Colonic mucosa (tissue), 4 donors: ENCODE measurements at regions of chr4 and their contacts with region 1.

Region 1: DNA sequence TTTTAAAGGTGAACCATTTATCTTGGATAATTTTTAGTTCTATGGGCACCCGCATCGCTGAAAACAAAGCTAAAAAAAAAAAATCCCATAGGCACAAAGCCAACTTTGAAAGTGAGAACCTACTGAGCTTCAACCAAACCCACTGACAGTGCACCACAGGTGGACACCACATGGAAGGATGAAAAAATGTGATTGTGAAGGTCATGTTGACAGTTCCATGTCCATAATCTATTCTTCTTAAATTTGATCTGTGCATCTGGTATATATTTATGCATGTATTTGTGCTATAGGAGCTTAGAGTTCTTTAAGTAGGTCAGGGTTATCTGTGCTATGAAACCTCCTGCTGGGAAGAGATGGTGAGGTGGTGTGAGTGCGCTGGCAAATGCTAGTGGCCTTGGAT is 374.3 kb downstream of the SPRY1 start:
- DNase-seq: no peak
- H3K4me3 ChIP-seq: no peak overlapping the region
- H3K27ac ChIP-seq: no peak overlapping the region
- H3K4me1 ChIP-seq: no peaks in the 10 kb centered on the region
- H3K27me3 ChIP-seq: no peaks in the 10 kb centered on the region
- CTCF ChIP-seq: no peak

Region 2: DNA sequence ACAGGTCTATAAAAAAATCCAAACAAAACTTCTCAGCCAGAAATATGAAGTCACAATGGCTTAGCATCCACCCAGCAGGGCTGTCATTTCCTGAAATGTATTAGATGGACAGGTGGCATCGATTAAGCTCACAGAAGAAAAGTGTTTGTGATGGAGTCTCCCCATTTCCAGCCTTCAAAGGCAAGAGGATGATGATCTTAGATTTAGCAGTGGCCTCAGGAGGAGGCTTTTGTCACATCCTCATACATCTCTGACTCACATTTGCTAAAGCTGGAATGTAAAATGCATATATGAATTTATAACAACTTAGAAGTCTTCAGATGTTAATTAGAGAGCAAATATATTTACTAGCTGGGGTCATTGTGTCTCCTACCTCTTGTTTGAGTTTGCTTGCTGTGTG is 67.6 kb after region 1 on chr4:
- intact Hi-C with region 1: no loop called
- DNase-seq: no peak
- H3K4me3 ChIP-seq: no peak overlapping the region
- H3K27ac ChIP-seq: no peak overlapping the region
- H3K4me1 ChIP-seq: no peaks in the 10 kb centered on the region
- H3K27me3 ChIP-seq: no peaks in the 10 kb centered on the region
- CTCF ChIP-seq: no peak

Region 3: GRCh38 chr4:124262211-124263179 is 491.6 kb after region 1 on chr4:
- intact Hi-C with region 1: loop called (anchors 5 kb)
- DNase-seq: peak; percentile 63
- H3K4me3 ChIP-seq: no peak overlapping the region
- H3K27ac ChIP-seq: no peak overlapping the region
- H3K4me1 ChIP-seq: no peaks in the 10 kb centered on the region
- H3K27me3 ChIP-seq: no peaks in the 10 kb centered on the region
- CTCF ChIP-seq: peak; percentile 68